ENCODE measurements at regions of chr7 and their contacts with region 1.

Region 1: GRCh38 chr7:121385800-121386179 is 10.3 kb downstream of the FAM3C start:
- DNase-seq: peak; percentile 41
- CTCF ChIP-seq: no peak

Region 2: GRCh38 chr7:120805636-120806388 is 580.0 kb before region 1 on chr7:
- CTCF ChIA-PET with region 1: no interaction called
- POLR2A ChIA-PET with region 1: no interaction called
- DNase-seq: peak; percentile 53
- CTCF ChIP-seq: peak; percentile 74

Region 3: GRCh38 chr7:121372376-121373010 is 13.3 kb before region 1 on chr7:
- CTCF ChIA-PET with region 1: interaction called, 61 read pairs
- POLR2A ChIA-PET with region 1: interaction called, 4 read pairs
- DNase-seq: peak; percentile 45
- CTCF ChIP-seq: no peak